Dendritic cell treated with granulocyte-macrophage colony-stimulating factor and Interleukin-4, amounts not matched to agents 40 ng/mL and 50 ng/mL, for 4 days (primary cell): ENCODE measurements at regions of chr20 and their contacts with region 1.

Region 1: DNA sequence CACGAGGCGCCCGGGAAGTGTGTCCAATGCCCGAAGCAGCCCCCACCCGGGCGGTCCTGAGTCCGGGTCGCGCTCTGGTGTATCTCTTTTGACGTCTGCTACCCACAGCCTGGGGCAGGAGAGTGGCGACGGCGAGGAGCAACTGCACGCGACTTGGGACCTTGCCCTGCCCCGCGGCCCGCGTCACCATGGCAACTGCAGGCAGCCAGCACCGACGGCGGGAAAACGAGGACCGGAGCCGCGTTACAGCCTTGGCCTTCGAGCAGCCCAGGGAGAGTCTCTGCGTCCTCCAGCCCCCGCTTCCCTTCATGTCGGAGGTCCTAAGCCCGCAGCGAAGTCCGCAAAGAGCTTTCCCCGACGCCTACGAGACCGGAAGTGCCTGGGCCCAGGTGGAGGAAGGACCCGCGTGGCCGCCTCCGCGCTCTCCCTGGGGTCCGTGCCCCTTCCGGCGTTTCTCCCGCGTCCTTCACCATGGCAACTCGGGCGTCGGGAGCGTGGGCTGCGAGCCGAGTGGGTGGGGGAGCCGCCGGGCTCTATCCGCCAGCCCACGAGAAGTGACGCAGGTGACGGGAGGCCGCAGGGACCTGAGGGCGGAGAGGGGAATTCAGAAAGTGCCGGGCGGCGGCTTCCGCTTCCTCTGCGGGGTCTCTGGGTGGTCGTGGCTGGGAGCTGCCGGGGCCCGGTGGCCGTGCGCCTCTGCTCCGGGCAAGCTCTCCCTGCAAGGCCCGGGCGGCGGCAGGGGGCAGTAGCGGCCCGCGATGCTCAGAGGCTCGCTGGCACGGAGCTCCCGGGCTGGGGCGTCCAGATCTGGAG is 88.6 kb upstream of the TGM3 start:
- H3K4me3 Mint-ChIP-seq: peak overlapping the region; percentile 79
- H3K27ac Mint-ChIP-seq: peak overlapping the region; percentile 72
- H3K4me1 Mint-ChIP-seq: peaks cover 26% of the 10 kb centered on the region
- H3K27me3 Mint-ChIP-seq: peaks cover 43% of the 10 kb centered on the region

Region 2: DNA sequence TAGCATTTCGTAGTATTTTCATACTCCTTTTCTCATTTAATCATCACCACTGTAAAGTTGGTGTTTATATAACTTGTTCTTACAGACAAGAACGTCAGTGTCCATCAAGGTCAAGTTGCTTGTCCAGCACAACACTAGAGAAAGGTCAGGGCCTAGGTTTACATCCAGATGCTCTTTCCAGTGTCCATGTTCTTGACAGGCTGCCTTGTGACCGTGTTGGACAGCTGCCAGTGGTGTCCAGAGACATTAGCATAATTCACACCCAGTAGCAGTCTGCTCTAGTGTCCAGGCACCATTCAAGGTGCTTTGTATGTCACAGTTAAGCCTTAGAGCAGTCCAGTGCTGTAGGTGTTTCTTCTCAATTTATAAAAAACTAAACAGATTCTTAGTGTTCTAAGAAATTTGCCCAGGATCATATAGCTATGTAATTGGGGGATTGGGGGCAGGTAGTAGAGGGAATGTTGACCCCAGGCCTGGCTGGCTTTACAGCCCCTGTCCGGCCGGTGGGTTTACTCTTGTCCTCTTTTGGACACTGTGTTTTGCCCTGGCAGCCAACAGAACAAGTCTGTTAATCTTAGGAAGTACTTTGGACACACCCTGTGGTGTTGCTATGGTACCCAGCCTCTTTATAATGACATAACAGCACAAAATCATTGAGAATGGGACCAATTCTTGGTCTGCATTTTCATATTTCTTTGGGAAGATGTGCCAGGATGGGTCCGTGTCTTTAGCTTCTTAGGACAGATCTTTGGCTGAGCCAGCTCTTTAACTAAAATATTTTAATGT is 97.5 kb before region 1 on chr20:
- intact Hi-C with region 1: no loop called
- H3K4me3 Mint-ChIP-seq: no peak overlapping the region
- H3K27ac Mint-ChIP-seq: no peak overlapping the region
- H3K4me1 Mint-ChIP-seq: peaks cover 72% of the 10 kb centered on the region
- H3K27me3 Mint-ChIP-seq: no peaks in the 10 kb centered on the region

Region 3: DNA sequence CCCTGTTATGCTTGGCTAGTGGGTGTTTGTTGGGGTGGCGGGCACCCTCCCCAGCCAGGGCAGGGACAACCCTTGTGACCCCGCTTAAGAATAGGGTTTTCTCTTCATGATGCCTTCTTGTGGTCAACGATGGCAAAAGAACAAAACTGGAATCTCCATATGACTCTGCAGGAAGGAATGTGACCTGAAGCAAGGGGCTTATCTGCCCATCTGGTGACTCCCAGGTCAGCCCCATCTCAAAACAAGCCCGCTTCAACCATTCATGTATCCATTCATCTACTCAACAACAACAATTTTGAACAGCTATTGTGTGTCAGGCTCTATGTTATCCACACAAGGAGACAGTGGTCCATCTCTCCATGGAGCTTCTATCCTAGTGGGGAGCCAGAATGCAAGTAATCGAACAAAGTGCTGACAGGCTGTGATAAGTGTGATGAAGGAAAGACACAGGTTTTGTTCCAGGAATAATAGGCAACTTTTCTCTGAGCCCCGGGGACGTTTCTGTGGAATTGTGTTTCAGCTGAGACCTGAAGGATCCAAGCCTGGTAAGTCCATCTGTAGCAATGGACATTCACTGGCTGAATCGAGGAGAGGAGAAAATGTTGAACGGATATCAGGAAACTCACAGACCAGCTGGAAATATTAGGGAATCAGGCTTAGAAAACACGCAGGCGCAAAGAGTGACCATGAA is 142.8 kb after region 1 on chr20:
- intact Hi-C with region 1: loop called (anchors 1 kb)
- H3K4me3 Mint-ChIP-seq: no peak overlapping the region
- H3K27ac Mint-ChIP-seq: no peak overlapping the region
- H3K4me1 Mint-ChIP-seq: no peaks in the 10 kb centered on the region
- H3K27me3 Mint-ChIP-seq: peaks cover 40% of the 10 kb centered on the region

Region 4: DNA sequence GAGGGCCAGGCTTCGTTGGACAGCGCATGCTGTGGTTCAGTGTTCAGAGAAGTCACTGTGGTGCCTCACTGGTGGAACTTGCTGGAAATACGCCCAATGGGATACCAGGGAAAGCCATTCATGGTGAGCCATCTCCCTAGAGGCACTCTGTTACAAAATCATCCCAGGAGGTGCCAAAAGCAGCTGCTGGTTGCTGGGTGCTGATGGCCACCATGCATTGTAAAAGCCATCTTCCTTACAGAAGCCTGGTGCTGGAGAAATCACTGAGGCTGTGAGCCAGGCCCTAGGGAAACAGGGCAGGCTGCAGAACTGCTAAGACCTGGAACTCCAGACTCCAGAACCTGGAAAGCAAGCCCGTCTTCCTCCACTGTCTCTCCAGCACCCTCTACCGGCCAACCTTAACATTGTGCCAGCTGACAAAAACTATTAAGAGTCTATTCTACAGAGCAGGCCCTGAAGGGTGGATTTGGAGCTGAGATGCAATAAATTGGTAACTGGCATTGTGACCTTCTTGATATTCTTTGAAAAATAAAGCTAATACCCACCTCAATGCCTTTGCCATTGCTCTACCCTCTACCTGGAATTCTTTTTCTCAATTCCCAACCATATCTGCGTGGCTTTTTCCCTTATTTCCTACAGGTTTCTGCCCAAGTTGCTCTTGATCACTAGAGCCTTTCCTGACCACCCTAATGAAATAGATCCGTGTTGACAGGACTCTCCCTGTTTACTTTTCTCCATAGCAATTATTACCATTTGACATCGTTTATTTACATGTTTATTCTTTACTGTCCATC is 245.0 kb after region 1 on chr20:
- intact Hi-C with region 1: loop called (anchors 2 kb)
- H3K4me3 Mint-ChIP-seq: no peak overlapping the region
- H3K27ac Mint-ChIP-seq: no peak overlapping the region
- H3K4me1 Mint-ChIP-seq: peaks cover 9% of the 10 kb centered on the region
- H3K27me3 Mint-ChIP-seq: peaks cover 20% of the 10 kb centered on the region